Activated T-helper 1 cell treated with anti-CD3 and anti-CD28 coated beads, Interleukin-12 subunit alpha, Interleukin-12 subunit beta, Interleukin-2, Interleukin-4 antibody, amounts not matched to agents 30 ng/mL and 10 ng/mL and 1 ng/mL, durations not matched to agents 14 hours and 24 hours and 36 hours (primary cell): ENCODE measurements at regions of chr16 and their contacts with region 1.

Region 1: GRCh38 chr16:66608241-66609138 is 4.0 kb downstream of the CMTM3 start:
- DNase-seq: peak; percentile 68
- H3K4me3 Mint-ChIP-seq: peak overlapping the region; percentile 56
- H3K27ac Mint-ChIP-seq: peak overlapping the region; percentile 75
- H3K4me1 Mint-ChIP-seq: peaks cover 25% of the 10 kb centered on the region
- H3K27me3 Mint-ChIP-seq: no peaks in the 10 kb centered on the region

Region 2: GRCh38 chr16:66516808-66517585 is 91.5 kb before region 1 on chr16:
- intact Hi-C with region 1: loop called (anchors 1 kb)
- DNase-seq: peak; percentile 84
- H3K4me3 Mint-ChIP-seq: peak overlapping the region; percentile 88
- H3K27ac Mint-ChIP-seq: peak overlapping the region; percentile 99
- H3K4me1 Mint-ChIP-seq: peaks cover 78% of the 10 kb centered on the region
- H3K27me3 Mint-ChIP-seq: no peaks in the 10 kb centered on the region

Region 3: GRCh38 chr16:66552286-66553177 is 56.0 kb before region 1 on chr16 and contains the start of gene CKLF:
- intact Hi-C with region 1: loop called (anchors 1 kb)
- DNase-seq: peak; percentile 93
- H3K4me3 Mint-ChIP-seq: peak within 1 kb of the TSS; percentile 99
- H3K27ac Mint-ChIP-seq: peak within 1 kb of the TSS; percentile 95
- H3K4me1 Mint-ChIP-seq: peaks cover 81% of the 10 kb centered on the region
- H3K27me3 Mint-ChIP-seq: peaks cover 2% of the 10 kb centered on the region
- total RNA-seq, gene CKLF: 153 and 159 TPM in 2 replicates

Region 4: GRCh38 chr16:66588981-66589713 is 19.3 kb before region 1 on chr16:
- intact Hi-C with region 1: loop called (anchors 1 kb)
- DNase-seq: peak; percentile 54
- H3K4me3 Mint-ChIP-seq: peak overlapping the region; percentile 73
- H3K27ac Mint-ChIP-seq: peak overlapping the region; percentile 49
- H3K4me1 Mint-ChIP-seq: peaks cover 42% of the 10 kb centered on the region
- H3K27me3 Mint-ChIP-seq: peaks cover 3% of the 10 kb centered on the region

Region 5: GRCh38 chr16:66696669-66697630 is 88.5 kb after region 1 on chr16 and contains the start of gene CMTM4:
- intact Hi-C with region 1: loop called (anchors 2 kb)
- DNase-seq: peak; percentile 74
- H3K4me3 Mint-ChIP-seq: peak within 1 kb of the TSS; percentile 77
- H3K27ac Mint-ChIP-seq: no peak within 1 kb of the TSS
- H3K4me1 Mint-ChIP-seq: no peaks in the 10 kb centered on the region
- H3K27me3 Mint-ChIP-seq: peaks cover 38% of the 10 kb centered on the region
- total RNA-seq, gene CMTM4: 3.3 and 3.9 TPM in 2 replicates

Region 6: DNA sequence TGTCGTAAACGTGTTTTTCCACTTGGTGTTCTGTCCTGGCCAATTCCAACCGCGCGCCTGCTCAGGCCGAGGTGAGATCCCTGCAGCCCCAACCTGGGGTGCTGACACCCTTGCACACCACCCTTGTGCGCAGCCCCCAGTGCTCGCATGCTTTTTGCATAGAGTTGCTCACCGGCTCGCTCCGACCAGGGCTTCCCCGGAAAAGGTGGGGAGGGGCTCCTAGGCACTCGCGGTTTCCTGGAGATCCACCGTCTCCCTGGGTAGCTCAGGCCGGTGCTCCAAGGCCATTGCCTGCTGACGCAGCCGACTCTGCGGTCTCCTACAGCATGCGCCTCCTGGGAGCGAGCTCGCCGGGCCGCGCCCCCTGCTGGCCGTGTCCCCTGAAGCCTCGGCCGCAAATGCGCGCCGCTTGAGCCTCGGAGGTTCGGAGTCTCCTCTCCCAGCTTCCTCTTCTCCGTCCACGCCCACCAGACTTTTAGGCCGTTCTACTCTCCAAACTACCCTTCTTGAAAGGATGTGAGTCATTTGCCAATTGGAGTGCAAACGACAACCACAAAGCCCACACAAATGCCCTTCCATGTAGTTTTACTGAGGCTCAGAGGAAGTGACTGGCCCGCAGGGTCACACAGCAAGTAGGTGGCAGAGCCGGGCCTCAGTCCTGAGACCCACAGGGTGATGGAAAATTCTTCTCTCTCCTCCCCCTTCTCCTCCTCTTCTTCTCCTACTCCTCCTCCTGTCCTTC is 264.6 kb after region 1 on chr16:
- intact Hi-C with region 1: loop called (anchors 2 kb)
- DNase-seq: peak; percentile 90
- H3K4me3 Mint-ChIP-seq: peak overlapping the region; percentile 80
- H3K27ac Mint-ChIP-seq: peak overlapping the region; percentile 92
- H3K4me1 Mint-ChIP-seq: peaks cover 60% of the 10 kb centered on the region
- H3K27me3 Mint-ChIP-seq: no peaks in the 10 kb centered on the region